Gastrocnemius medialis (tissue), 4 donors: ENCODE measurements at regions of chr3 and their contacts with region 1.

Region 1: DNA sequence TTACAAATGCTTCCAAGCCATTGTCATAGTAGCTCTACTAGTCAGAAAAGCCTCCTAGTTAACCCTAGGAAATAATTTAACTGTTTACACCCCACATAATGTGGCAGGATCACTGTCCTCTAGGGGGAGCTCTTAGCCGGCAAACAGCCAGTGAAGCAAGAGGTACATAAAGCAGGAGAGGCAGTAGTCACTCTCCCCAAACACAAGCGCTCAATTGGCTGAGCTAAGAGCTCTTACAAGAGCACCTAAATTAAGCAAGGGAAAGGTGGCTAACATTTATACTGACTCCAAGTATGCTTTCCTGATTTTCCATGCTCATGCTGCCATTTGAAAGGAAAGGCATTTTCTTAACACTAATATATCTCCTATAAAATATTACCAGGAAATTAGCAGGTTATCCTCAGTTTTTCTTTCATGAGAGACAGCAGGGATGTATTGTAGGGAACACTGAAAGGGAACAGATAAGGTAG is 37.6 kb downstream of the NCEH1 start:
- DNase-seq: peak; percentile 9 to 62
- ATAC-seq: peak; percentile 61 to 69
- H3K4me3 ChIP-seq: no peak overlapping the region
- H3K27ac ChIP-seq: peak overlapping the region in 3 of 4 donors; percentile 21 to 57 (median 36)
- H3K4me1 ChIP-seq: peaks cover 19% of the 10 kb centered on the region in 2 donors
- H3K27me3 ChIP-seq: no peaks in the 10 kb centered on the region
- CTCF ChIP-seq: peak; percentile 59 to 74 (median 73)
- POLR2A ChIP-seq: no peak

Region 2: DNA sequence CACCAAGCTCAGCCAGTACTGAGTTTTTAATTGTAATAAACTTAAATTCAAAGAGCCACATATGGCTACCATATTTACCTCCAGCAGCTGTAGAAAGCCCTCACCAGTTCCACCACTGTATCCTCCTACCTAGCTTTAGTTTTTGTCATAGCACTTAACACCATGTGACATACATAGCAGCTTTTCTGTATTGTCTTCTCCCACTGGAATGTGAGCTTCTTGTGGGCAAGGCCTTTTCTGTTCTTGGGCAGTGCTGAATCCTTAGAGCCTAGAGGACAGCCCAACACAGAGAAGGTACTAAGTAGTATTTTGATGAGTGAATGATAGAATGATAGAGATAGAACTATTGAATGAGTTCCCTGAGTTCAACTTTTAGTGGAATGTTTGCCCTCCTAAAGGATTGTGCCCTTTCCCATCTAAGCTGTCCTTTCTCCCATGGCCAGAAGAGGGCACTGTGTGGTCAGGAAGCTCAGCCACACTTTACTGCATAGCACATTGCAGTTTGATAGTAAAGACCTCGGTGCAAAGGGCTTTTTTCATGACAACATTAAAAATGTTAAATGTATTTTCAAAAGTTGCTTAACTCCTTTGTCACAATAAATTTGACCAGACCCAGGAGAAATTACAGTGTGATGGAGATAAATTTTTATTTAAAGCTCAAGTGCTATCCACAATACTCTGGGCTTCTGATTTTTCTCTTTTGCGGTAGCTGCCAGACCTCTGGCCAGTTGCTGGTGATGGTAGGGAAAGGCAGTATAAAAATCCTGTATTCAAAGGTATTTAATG is 340.8 kb before region 1 on chr3:
- in situ Hi-C with region 1: no loop called
- intact Hi-C with region 1: no loop called
- DNase-seq: peak in 1 of 2 donors; percentile 48
- ATAC-seq: peak; percentile 68 to 85
- H3K4me3 ChIP-seq: no peak overlapping the region
- H3K27ac ChIP-seq: peak overlapping the region; percentile 10 to 53 (median 31)
- H3K4me1 ChIP-seq: no peaks in the 10 kb centered on the region
- H3K27me3 ChIP-seq: no peaks in the 10 kb centered on the region
- CTCF ChIP-seq: peak; percentile 72 to 90 (median 82)
- POLR2A ChIP-seq: no peak

Region 3: GRCh38 chr3:172710664-172711453 is 37.6 kb after region 1 on chr3 and contains the start of gene NCEH1:
- in situ Hi-C with region 1: loop called in 1 of 4 experiments (anchors 5 kb)
- intact Hi-C with region 1: loop called (anchors 1 kb)
- DNase-seq: peak; percentile 89 to 93
- ATAC-seq: peak; percentile 97 to 98
- H3K4me3 ChIP-seq: peak within 1 kb of the TSS; percentile 76 to 89 (median 81)
- H3K27ac ChIP-seq: peak within 1 kb of the TSS; percentile 84 to 90 (median 86)
- H3K4me1 ChIP-seq: peaks cover 19 to 26% of the 10 kb centered on the region in 2 donors
- H3K27me3 ChIP-seq: no peaks in the 10 kb centered on the region
- CTCF ChIP-seq: peak; percentile 75 to 95 (median 86)
- POLR2A ChIP-seq: peak; percentile 75 to 86
- total RNA-seq, gene NCEH1: 7.0 to 19.8 (median 8.2) TPM